H1 (cell line): ENCODE measurements at regions of chr2 and their contacts with region 1.

Region 1: GRCh38 chr2:96138179-96139145 is at the start of gene ASTL:
- DNase-seq: peak; percentile 85 to 88
- H3K4me3 ChIP-seq: peak within 1 kb of the TSS in 1 of 4 experiments; percentile 39; a peak in 2 of 8 replicates
- H3K27ac ChIP-seq: no peak within 1 kb of the TSS
- H3K4me1 ChIP-seq: peaks cover 0 to 13% (median 6%) of the 10 kb centered on the region in 4 experiments; a peak in 5 of 7 replicates
- H3K27me3 ChIP-seq: no peaks in the 10 kb centered on the region
- CTCF ChIP-seq: peak in 2 of 3 experiments; percentile 76 to 90; a peak in 3 of 4 replicates
- EP300 ChIP-seq: peak in 1 of 2 experiments; percentile 37; a peak in 1 of 3 replicates
- POLR2A ChIP-seq: no peak; a peak in 1 of 3 replicates
- RAD21 ChIP-seq: peak; percentile 87 to 90
- total RNA-seq, gene ASTL: 0.60 and 0.75 TPM in 2 replicates

Region 2: GRCh38 chr2:95578539-95578938 is 559.9 kb before region 1 on chr2:
- CTCF ChIA-PET with region 1: no interaction called
- POLR2A ChIA-PET with region 1: no interaction called
- DNase-seq: no peak
- H3K4me3 ChIP-seq: no peak overlapping the region
- H3K27ac ChIP-seq: no peak overlapping the region
- H3K4me1 ChIP-seq: no peaks in the 10 kb centered on the region
- H3K27me3 ChIP-seq: no peaks in the 10 kb centered on the region
- CTCF ChIP-seq: no peak
- EP300 ChIP-seq: no peak
- POLR2A ChIP-seq: no peak
- RAD21 ChIP-seq: no peak

Region 3: GRCh38 chr2:96108541-96109360 is 29.7 kb before region 1 on chr2:
- CTCF ChIA-PET with region 1: interaction called, 12 read pairs
- POLR2A ChIA-PET with region 1: interaction called, 5 read pairs
- DNase-seq: no peak
- H3K4me3 ChIP-seq: peak overlapping the region in 1 of 4 experiments; percentile 35; a peak in 1 of 8 replicates
- H3K27ac ChIP-seq: peak overlapping the region; percentile 15; the same call in 1 of the 2 replicates
- H3K4me1 ChIP-seq: peaks cover 0 to 25% (median 17%) of the 10 kb centered on the region in 4 experiments; a peak in 6 of 7 replicates
- H3K27me3 ChIP-seq: no peaks in the 10 kb centered on the region
- CTCF ChIP-seq: no peak
- EP300 ChIP-seq: peak in 1 of 2 experiments; percentile 26; a peak in 1 of 3 replicates
- POLR2A ChIP-seq: no peak
- RAD21 ChIP-seq: no peak

Region 4: DNA sequence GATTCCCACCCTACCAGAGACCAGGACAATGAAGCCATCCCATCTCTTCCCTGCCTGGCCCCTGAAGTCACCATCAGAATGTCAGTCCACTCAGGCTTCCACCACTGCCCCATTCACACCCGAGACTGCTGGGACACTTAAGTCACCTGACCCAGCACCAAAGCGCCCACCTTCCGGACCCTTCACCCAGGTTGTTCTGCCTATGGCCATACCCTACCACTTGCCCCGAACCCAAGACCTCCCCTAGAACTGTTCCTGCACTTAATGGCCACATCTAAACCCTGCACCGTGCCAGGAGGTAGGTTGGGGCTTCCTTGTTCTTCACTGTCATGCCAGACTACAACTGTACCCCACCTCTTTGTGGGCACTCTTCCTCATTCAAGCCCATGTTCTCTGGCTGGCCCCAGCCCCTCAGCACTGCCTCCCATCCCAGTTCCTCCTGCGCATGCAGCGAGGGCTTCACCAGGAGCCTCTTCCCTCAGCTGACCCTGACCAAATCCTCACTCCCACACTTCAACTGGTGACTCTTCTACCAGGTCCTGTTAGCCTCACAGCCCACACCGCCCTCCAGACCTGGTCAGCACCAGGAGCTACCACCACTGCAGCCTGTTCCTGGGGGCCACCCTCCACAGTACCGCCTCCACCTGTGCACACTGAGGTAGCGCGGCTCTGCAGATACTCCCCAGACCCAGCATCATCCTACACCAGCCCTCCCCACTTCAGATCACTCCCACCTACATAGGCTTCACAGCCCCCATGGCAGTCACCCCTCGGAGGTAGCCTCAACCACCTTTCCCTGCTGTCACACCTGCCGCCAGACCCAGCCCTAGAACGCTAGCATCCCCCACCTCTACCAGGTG is 13.8 kb before region 1 on chr2:
- CTCF ChIA-PET with region 1: interaction called, 11 read pairs
- POLR2A ChIA-PET with region 1: no interaction called
- DNase-seq: no peak
- H3K4me3 ChIP-seq: no peak overlapping the region
- H3K27ac ChIP-seq: no peak overlapping the region
- H3K4me1 ChIP-seq: peaks cover 0 to 4% (median 2%) of the 10 kb centered on the region in 4 experiments; a peak in 3 of 7 replicates
- H3K27me3 ChIP-seq: no peaks in the 10 kb centered on the region; a peak in 3 of 7 replicates
- CTCF ChIP-seq: no peak
- EP300 ChIP-seq: no peak
- POLR2A ChIP-seq: no peak
- RAD21 ChIP-seq: no peak

Region 5: GRCh38 chr2:96174251-96175144 is 36.0 kb after region 1 on chr2:
- CTCF ChIA-PET with region 1: interaction called, 155 read pairs
- POLR2A ChIA-PET with region 1: interaction called, 11 read pairs
- DNase-seq: peak; percentile 33 to 90
- H3K4me3 ChIP-seq: no peak overlapping the region
- H3K27ac ChIP-seq: no peak overlapping the region
- H3K4me1 ChIP-seq: no peaks in the 10 kb centered on the region
- H3K27me3 ChIP-seq: no peaks in the 10 kb centered on the region
- CTCF ChIP-seq: peak; percentile 90 to 96 (median 94)
- EP300 ChIP-seq: no peak
- POLR2A ChIP-seq: no peak
- RAD21 ChIP-seq: peak; percentile 93 to 96

Region 6: DNA sequence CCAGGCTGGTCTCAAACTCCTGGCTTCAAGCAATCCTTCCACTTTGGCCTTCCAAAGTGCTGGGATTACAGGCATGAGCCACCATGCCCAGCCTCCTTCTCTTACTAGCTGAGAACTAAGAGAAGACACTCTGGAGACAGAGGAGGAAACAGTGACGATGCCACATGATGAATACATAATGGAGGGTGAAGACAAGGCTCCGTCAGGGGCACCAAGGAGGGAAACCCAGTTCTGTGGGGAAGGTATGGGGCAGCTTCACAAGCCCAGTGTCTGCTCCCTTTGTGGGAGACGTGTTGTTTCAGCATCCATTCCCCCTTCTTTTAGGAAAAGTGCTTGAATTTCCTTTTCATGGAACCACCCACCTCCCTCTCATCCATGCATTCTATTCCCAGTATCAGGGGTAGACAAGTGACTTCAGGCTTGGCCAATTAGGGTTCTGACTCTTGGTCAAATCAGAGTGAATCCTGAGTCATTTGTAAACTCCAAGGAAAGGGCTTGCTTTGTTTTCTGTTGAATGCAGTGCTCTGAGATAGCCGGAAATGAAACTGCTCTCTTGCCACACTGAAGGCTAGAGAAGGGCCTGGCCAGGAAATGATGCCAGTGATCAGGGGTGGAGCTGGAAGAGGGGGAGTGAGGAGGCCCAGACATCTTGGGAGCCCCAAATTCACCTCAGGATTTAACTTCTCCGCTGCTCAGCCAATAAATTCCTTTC is 103.6 kb after region 1 on chr2:
- CTCF ChIA-PET with region 1: interaction called, 10 read pairs
- POLR2A ChIA-PET with region 1: no interaction called
- DNase-seq: no peak
- H3K4me3 ChIP-seq: no peak overlapping the region
- H3K27ac ChIP-seq: no peak overlapping the region
- H3K4me1 ChIP-seq: peaks cover 0 to 3% (median 0%) of the 10 kb centered on the region in 4 experiments; a peak in 1 of 7 replicates
- H3K27me3 ChIP-seq: no peaks in the 10 kb centered on the region
- CTCF ChIP-seq: no peak
- EP300 ChIP-seq: no peak
- POLR2A ChIP-seq: no peak
- RAD21 ChIP-seq: no peak